ENCODE measurements at regions of chr9 and their contacts with region 1.

Region 1: DNA sequence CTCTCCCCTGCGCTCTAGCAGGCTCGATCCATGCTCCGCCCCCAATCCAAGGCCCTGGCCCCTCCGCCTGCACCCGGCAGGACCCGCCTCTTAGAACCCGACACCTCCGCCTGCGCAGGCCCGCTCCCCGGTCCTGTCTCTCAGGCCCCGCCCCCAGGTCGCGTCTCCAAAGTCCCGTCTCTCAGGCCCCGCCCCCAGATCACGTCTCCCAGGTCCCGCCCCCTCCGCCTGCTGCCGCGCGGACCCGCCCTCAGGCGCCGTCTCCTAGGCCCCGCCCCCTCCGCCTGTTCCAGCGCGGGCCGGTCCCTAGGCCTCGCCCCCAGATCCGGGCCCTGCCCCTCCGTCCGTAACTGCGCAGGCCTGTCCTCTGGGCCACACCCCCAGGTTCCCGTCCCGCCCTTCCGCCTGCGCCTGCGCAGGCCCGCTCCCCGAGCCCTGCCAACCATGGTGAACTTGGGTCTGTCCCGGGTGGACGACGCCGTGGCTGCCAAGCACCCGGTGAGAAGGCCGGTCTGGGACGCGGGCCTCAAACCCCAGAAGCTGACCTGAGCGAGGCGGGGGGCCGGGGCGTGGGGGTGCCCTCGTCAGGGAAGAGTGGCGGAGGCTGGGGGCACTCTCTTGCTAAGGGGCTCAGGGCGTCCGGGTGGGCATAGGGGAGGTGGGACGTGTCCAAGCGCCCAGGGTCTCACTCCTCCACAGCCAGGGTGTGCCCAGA is at the start of gene TMEM141:
- DNase-seq: peak; percentile 93 to 99 (median 96)
- ATAC-seq: peak; percentile 91
- H3K4me3 ChIP-seq: peak within 1 kb of the TSS; percentile 58
- H3K27ac ChIP-seq: peak within 1 kb of the TSS; percentile 93
- H3K4me1 ChIP-seq: peaks cover 57 to 65% of the 10 kb centered on the region in 2 experiments
- H3K27me3 ChIP-seq: no peaks in the 10 kb centered on the region
- CTCF ChIP-seq: no peak; a peak in 1 of 6 replicates
- EP300 ChIP-seq: 0 out of 2 replicates have a peak, but pooled peaks have one; percentile 3
- POLR2A ChIP-seq: peak; percentile 74
- RAD21 ChIP-seq: no peak
- polyA plus RNA-seq, gene TMEM141: 21.5 to 35.8 TPM

Region 2: DNA sequence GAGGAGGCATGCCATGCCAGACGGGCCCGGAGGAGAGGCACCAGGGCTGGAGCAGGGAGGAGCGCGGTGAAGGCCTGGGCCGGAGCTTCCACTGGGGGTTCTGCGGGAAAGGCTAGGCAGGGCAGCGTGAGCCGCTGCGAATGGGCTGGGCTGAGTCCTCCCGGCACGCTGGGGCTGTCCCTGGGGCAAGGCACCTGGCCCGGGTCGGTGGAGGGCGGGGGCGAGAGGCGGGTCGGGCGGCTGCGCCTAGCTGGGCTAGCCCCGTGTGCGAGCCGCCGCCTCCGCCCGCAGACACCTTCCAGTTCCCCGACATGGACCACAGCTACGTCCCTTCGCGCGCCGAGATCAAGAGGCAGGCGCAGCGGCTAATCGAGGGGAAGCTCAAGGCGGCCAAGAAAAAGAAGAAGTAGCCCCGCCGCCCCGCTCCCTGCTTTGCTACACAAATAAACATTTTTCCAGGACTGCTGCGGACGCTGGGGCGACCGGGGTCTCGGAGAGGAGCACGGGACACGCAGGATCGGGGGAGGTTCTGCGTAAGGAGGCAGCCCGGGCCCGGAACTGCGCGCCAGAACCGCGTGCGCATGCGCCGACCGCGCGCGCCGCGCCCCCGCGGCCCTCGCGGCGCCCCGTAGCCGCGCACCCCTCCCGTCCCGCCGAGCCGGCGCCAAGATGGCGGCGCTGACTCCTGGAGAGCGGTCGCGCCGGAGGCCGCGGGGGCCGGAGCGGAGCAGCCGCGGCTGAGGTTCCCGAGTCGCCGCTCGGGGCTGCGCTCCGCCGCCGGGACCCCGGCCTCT is 16.4 kb after region 1 on chr9 and contains the start of gene RABL6:
- CTCF ChIA-PET with region 1: interaction called, 3 read pairs
- POLR2A ChIA-PET with region 1: interaction called, 14 read pairs
- in situ Hi-C with region 1: no loop called
- intact Hi-C with region 1: no loop called
- DNase-seq: peak; percentile 88 to 95 (median 92)
- ATAC-seq: peak; percentile 72
- H3K4me3 ChIP-seq: peak within 1 kb of the TSS; percentile 97
- H3K27ac ChIP-seq: peak within 1 kb of the TSS; percentile 91
- H3K4me1 ChIP-seq: peaks cover 26 to 56% of the 10 kb centered on the region in 2 experiments
- H3K27me3 ChIP-seq: no peaks in the 10 kb centered on the region
- CTCF ChIP-seq: no peak
- EP300 ChIP-seq: no peak; the same call in 1 of the 2 replicates
- POLR2A ChIP-seq: peak; percentile 81
- RAD21 ChIP-seq: no peak
- polyA plus RNA-seq, gene RABL6: 5.6 to 6.4 TPM

Region 3: DNA sequence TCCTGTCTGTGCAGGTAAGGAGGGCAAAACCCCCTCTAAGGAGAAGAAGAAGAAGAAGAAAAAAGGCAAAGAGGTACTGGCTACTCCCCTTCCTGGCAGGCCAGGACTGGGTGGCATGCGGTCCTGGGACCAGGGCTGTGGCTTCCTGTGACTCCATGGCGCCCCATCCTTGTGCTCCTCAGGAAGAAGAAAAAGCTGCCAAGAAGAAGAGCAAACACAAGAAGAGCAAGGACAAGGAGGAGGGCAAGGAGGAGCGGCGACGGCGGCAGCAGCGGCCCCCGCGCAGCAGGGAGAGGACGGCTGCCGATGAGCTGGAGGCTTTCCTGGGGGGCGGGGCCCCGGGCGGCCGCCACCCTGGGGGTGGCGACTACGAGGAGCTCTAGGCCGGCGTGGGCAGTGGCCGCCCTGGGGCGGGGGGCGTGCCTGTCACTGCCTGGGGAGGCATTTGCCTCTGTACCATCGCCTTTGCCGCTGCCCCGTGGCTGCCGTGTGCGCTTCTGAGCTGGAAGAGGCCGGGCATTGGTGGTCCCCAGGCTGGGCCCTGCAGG is 49.1 kb after region 1 on chr9:
- CTCF ChIA-PET with region 1: interaction called, 3 read pairs
- POLR2A ChIA-PET with region 1: interaction called, 3 read pairs
- in situ Hi-C with region 1: no loop called
- intact Hi-C with region 1: loop called (anchors 2 kb)
- DNase-seq: peak; percentile 74 to 83 (median 78)
- ATAC-seq: peak; percentile 62
- H3K4me3 ChIP-seq: no peak overlapping the region
- H3K27ac ChIP-seq: peak overlapping the region; percentile 28; the same call in 2 of the 3 replicates
- H3K4me1 ChIP-seq: peaks cover 12 to 92% of the 10 kb centered on the region in 2 experiments
- H3K27me3 ChIP-seq: no peaks in the 10 kb centered on the region
- CTCF ChIP-seq: no peak
- EP300 ChIP-seq: no peak
- POLR2A ChIP-seq: peak; percentile 57
- RAD21 ChIP-seq: no peak

Region 4: DNA sequence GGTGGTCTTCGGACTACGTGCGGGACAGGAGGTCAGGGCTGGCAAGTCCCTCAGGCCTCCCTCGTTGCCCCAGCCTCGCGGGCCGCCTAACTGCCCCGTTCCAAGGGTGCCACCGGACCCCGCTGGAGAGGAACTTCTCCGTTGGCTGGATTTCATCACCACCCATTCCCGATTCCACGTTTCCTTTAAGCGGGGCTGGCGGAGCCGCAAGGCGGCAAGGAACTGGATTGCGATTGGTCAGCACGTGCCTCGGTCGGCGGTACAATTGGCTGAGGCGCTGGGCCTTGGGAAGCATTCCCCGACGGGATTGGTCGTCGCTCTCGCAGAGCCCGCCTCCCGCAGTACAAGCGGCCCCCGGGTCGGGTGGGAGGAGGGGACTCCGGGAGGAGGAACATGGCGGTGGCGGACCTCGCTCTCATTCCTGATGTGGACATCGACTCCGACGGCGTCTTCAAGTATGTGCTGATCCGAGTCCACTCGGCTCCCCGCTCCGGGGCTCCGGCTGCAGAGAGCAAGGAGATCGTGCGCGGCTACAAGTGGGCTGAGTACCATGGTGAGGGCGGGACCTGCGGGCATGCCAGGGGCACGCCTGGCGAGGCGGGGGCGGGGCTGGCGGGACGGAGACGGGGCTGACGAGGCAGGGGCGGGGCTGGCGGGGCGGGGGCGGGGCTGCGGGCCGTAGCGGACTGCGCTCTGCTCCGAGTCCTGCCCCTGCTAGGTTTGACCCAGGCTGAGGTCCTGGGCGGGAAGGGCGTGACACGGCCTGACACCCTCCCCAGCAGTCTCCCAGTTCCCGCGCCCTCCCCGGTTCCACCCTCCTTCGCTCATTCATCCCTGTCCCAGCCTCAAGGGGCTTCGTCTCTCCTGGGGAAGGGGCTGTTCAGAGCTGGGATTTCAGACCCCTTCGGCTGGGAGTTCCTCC is 58.2 kb after region 1 on chr9 and contains the start of gene PHPT1:
- CTCF ChIA-PET with region 1: no interaction called
- POLR2A ChIA-PET with region 1: interaction called, 3 read pairs
- in situ Hi-C with region 1: no loop called
- intact Hi-C with region 1: loop called (anchors 2 kb)
- DNase-seq: peak; percentile 94 to 99 (median 97)
- ATAC-seq: peak; percentile 84
- H3K4me3 ChIP-seq: peak within 1 kb of the TSS; percentile 95
- H3K27ac ChIP-seq: peak within 1 kb of the TSS; percentile 89
- H3K4me1 ChIP-seq: peaks cover 9 to 84% of the 10 kb centered on the region in 2 experiments; a peak in 4 of 5 replicates
- H3K27me3 ChIP-seq: no peaks in the 10 kb centered on the region
- CTCF ChIP-seq: no peak
- EP300 ChIP-seq: peak; percentile 22; the same call in 1 of the 2 replicates
- POLR2A ChIP-seq: peak; percentile 95
- RAD21 ChIP-seq: no peak
- polyA plus RNA-seq, gene PHPT1: 131 to 166 TPM

Region 5: DNA sequence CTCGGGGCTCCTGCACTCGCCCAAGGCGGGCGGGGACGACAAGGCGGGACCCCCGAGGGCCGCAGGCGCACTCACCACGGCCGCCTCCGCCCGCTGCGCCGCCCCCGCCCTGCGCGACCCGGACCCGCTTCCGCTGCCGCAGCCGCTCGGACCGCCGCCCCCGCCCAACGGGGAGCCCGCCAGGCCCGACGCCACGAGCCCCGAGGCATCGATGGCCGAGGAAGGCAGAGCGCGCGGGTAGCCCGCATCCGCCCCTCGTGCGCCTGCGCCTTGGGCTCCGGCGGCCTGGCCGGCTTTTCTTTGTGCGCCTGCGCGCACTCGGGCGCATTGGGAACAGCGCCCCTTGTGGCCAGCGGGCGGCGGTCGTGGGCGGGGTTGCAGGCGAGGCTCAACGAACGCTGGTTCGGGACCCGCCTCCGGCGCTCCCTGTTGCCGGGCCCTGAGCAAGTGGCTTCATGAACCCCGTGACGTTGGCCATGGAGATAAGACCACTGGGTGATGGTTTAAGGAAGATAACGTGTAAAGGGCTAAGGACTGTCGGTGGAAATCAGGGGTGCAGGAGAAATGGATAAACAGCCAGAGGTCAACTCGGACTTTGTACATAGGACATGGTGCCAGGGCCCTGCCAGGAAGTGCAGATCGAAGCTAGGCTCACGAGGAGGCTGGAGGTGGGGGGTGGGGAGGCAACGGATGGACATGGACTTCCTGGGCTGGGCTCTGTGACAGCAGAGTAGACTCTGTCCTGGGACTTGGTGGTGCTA is 153.6 kb after region 1 on chr9 and contains the starts of genes C8G and FBXW5:
- CTCF ChIA-PET with region 1: no interaction called
- POLR2A ChIA-PET with region 1: no interaction called
- in situ Hi-C with region 1: no loop called
- intact Hi-C with region 1: loop called (anchors 5 kb)
- DNase-seq: peak; percentile 96 to 99 (median 98)
- ATAC-seq: peak; percentile 78
- H3K4me3 ChIP-seq: peak within 1 kb of the TSS; percentile 95
- H3K27ac ChIP-seq: peak within 1 kb of the TSS; percentile 91
- H3K4me1 ChIP-seq: peaks cover 24 to 93% of the 10 kb centered on the region in 2 experiments
- H3K27me3 ChIP-seq: no peaks in the 10 kb centered on the region
- CTCF ChIP-seq: peak; percentile 93 to 98 (median 94)
- EP300 ChIP-seq: peak; percentile 59
- POLR2A ChIP-seq: 0 out of 2 replicates have a peak, but pooled peaks have one; percentile 34
- RAD21 ChIP-seq: peak in 1 of 2 experiments; percentile 41; a peak in 2 of 4 replicates
- polyA plus RNA-seq, gene C8G: 0.38 TPM in 1 of 2 experiments, not detected in the other
- polyA plus RNA-seq, gene FBXW5: 0.21 to 1.2 TPM

Region 6: DNA sequence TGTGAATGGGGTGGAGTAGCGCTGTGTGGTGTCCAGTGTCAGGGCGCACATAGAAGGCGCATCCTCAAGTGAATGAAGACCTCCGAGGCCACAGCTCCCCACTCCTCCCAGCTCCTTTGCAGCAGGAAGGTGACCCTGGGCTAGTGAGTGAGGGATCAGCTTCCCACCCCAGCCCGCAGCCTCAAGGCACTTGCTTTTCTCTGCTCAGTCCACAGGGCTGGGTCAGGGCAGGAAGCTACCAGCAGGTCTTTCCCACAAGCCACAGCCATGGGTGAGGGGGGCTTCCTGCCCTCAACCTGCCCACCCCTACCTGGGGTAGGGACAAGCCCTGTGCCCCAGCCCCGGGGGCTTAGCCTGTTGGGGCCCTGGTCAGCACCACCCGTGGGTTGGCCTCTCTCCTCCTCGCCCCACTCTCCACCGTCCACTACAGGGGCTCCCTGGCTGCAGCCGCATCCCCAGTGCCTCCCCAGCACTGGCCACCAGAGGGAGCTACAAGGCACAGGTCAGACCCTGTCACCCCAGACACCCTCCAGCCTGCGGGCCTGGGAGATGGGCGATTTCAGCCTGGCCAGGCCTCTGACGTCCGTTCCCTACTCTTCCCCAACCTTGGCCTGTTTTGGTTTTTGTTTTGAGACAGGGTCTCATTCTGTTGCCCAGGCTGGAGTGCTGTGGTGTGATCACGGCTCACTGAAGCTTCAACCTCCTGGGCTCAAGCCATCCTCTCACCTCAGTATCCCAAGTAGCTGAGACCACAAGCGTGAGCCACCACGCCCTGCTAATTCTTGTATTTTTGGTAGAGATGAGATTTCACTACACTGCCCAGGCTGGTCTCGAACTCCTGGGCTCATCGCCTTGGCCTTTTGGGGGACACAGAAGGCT is 238.2 kb after region 1 on chr9:
- CTCF ChIA-PET with region 1: interaction called, 7 read pairs
- POLR2A ChIA-PET with region 1: no interaction called
- in situ Hi-C with region 1: no loop called
- intact Hi-C with region 1: loop called (anchors 1 kb)
- DNase-seq: peak; percentile 78 to 89 (median 80)
- ATAC-seq: peak; percentile 93
- H3K4me3 ChIP-seq: peak overlapping the region; percentile 66
- H3K27ac ChIP-seq: no peak overlapping the region
- H3K4me1 ChIP-seq: peaks cover 9 to 84% of the 10 kb centered on the region in 2 experiments; a peak in 4 of 5 replicates
- H3K27me3 ChIP-seq: no peaks in the 10 kb centered on the region
- CTCF ChIP-seq: peak; percentile 89 to 92 (median 90)
- EP300 ChIP-seq: no peak; the same call in 1 of the 2 replicates
- POLR2A ChIP-seq: no peak
- RAD21 ChIP-seq: peak; percentile 15 to 49; a peak in 3 of 4 replicates

Region 7: DNA sequence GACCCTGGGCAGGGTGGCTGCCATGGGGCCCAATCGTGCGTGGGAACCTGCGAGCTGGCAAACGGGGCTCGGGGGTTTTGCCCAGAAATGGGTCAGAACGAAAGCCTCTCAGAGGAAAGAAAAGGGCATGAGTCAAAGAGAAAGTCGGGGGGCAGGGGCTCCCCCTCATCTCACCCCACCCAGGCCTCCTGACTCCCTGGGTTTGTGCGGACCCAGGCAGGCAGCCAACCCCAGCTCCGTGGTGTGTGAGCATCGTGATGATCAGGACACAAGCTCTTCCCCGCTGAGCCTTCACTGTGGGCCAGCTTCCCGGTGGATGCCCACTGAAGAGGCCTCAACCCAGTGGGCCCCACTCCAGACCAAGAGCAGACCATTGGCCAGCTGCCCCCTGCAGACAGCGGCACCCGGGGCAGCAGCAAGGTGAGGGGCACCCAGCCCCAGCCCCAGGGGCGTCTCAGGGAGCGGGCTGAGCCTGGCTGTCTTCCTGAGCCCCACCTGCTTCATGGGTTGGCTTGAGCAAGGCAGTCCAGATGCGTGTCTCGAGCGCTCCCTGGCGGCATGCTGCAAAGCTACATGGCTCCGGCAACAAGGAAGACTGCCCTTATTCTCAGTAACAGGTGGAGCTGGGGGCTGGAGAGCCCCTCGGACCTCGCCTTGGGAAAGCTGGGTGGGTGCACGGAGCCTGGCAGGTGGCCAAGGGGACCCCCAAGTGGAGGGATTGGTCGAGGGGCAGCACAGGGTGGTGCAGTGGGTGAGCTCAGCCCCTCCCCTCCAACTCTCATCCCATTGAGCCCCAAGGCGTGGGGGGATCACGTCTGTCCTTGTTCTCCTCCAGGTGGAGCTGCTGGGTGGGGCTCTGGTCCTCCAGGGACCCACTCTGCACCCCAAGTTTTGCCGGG is 244.0 kb after region 1 on chr9:
- CTCF ChIA-PET with region 1: interaction called, 10 read pairs
- POLR2A ChIA-PET with region 1: interaction called, 3 read pairs
- in situ Hi-C with region 1: no loop called
- intact Hi-C with region 1: no loop called
- DNase-seq: peak; percentile 80 to 90 (median 81)
- ATAC-seq: peak; percentile 98
- H3K4me3 ChIP-seq: no peak overlapping the region
- H3K27ac ChIP-seq: no peak overlapping the region
- H3K4me1 ChIP-seq: peaks cover 0 to 69% of the 10 kb centered on the region in 2 experiments; a peak in 3 of 5 replicates
- H3K27me3 ChIP-seq: peaks cover 0 to 14% of the 10 kb centered on the region in 2 experiments; a peak in 1 of 5 replicates
- CTCF ChIP-seq: peak; percentile 94 to 95 (median 95)
- EP300 ChIP-seq: no peak
- POLR2A ChIP-seq: no peak
- RAD21 ChIP-seq: peak; percentile 85 to 95